RWPE1 (cell line): ENCODE measurements at regions of chr9 and their contacts with region 1.

Region 1: GRCh38 chr9:27726244-27727081 is 153.2 kb upstream of the C9orf72 start:
- DNase-seq: peak; percentile 32
- H3K27ac ChIP-seq: no peak overlapping the region
- CTCF ChIP-seq: peak; percentile 90

Region 2: GRCh38 chr9:28073270-28073669 is 346.8 kb after region 1 on chr9:
- CTCF ChIA-PET with region 1: interaction called, 20 read pairs
- POLR2A ChIA-PET with region 1: no interaction called
- DNase-seq: peak; percentile 34
- H3K27ac ChIP-seq: no peak overlapping the region
- CTCF ChIP-seq: peak; percentile 62